IMR-90 (cell line): ENCODE measurements at regions of chr7 and their contacts with region 1.

Region 1: GRCh38 chr7:151519765-151520418 is at the start of gene RHEB:
- DNase-seq: peak; percentile 99
- ATAC-seq: peak; percentile 92
- H3K4me3 ChIP-seq: peak within 1 kb of the TSS; percentile 74
- H3K27ac ChIP-seq: peak within 1 kb of the TSS; percentile 91
- H3K4me1 ChIP-seq: peaks cover 2% of the 10 kb centered on the region; the same call in 1 of the 2 replicates
- H3K27me3 ChIP-seq: no peaks in the 10 kb centered on the region
- CTCF ChIP-seq: no peak
- POLR2A ChIP-seq: no peak; the same call in none of the 2 replicates
- RAD21 ChIP-seq: 0 out of 2 replicates have a peak, but pooled peaks have one; percentile 1
- total RNA-seq, gene RHEB: 19.7 and 45.5 TPM in 2 replicates

Region 2: GRCh38 chr7:150941981-150942590 is 577.8 kb before region 1 on chr7:
- CTCF ChIA-PET with region 1: no interaction called
- POLR2A ChIA-PET with region 1: no interaction called
- dilution Hi-C with region 1: no loop called
- in situ Hi-C with region 1: no loop called
- intact Hi-C with region 1: no loop called
- DNase-seq: no peak
- ATAC-seq: no peak
- H3K4me3 ChIP-seq: no peak overlapping the region
- H3K27ac ChIP-seq: no peak overlapping the region
- H3K4me1 ChIP-seq: peaks cover 5% of the 10 kb centered on the region; the same call in 1 of the 2 replicates
- H3K27me3 ChIP-seq: no peaks in the 10 kb centered on the region
- CTCF ChIP-seq: no peak
- POLR2A ChIP-seq: no peak
- RAD21 ChIP-seq: no peak

Region 3: GRCh38 chr7:151368136-151368571 is 151.7 kb before region 1 on chr7:
- CTCF ChIA-PET with region 1: interaction called, 3 read pairs
- POLR2A ChIA-PET with region 1: no interaction called
- dilution Hi-C with region 1: no loop called
- in situ Hi-C with region 1: no loop called
- intact Hi-C with region 1: loop called (anchors 1 kb)
- DNase-seq: peak; percentile 69
- ATAC-seq: peak; percentile 81
- H3K4me3 ChIP-seq: no peak overlapping the region
- H3K27ac ChIP-seq: no peak overlapping the region
- H3K4me1 ChIP-seq: peaks cover 15% of the 10 kb centered on the region
- H3K27me3 ChIP-seq: no peaks in the 10 kb centered on the region
- CTCF ChIP-seq: peak; percentile 87
- POLR2A ChIP-seq: no peak
- RAD21 ChIP-seq: peak; percentile 84

Region 4: GRCh38 chr7:151459726-151460473 is 60.0 kb before region 1 on chr7:
- CTCF ChIA-PET with region 1: no interaction called
- POLR2A ChIA-PET with region 1: no interaction called
- dilution Hi-C with region 1: no loop called
- in situ Hi-C with region 1: no loop called
- intact Hi-C with region 1: loop called (anchors 2 kb)
- DNase-seq: peak; percentile 86
- ATAC-seq: peak; percentile 93
- H3K4me3 ChIP-seq: peak overlapping the region; percentile 6; the same call in 1 of the 2 replicates
- H3K27ac ChIP-seq: peak overlapping the region; percentile 74
- H3K4me1 ChIP-seq: peaks cover 14% of the 10 kb centered on the region
- H3K27me3 ChIP-seq: no peaks in the 10 kb centered on the region
- CTCF ChIP-seq: peak; percentile 50
- POLR2A ChIP-seq: peak; percentile 22; the same call in 1 of the 2 replicates
- RAD21 ChIP-seq: peak; percentile 59

Region 5: GRCh38 chr7:151558575-151558974 is 38.7 kb after region 1 on chr7:
- CTCF ChIA-PET with region 1: no interaction called
- POLR2A ChIA-PET with region 1: no interaction called
- dilution Hi-C with region 1: no loop called
- in situ Hi-C with region 1: no loop called
- intact Hi-C with region 1: loop called (anchors 5 kb)
- DNase-seq: peak; percentile 87
- ATAC-seq: peak; percentile 89
- H3K4me3 ChIP-seq: no peak overlapping the region
- H3K27ac ChIP-seq: peak overlapping the region; percentile 92
- H3K4me1 ChIP-seq: peaks cover 11% of the 10 kb centered on the region
- H3K27me3 ChIP-seq: no peaks in the 10 kb centered on the region
- CTCF ChIP-seq: no peak
- POLR2A ChIP-seq: no peak
- RAD21 ChIP-seq: 0 out of 2 replicates have a peak, but pooled peaks have one; percentile 5

Region 6: DNA sequence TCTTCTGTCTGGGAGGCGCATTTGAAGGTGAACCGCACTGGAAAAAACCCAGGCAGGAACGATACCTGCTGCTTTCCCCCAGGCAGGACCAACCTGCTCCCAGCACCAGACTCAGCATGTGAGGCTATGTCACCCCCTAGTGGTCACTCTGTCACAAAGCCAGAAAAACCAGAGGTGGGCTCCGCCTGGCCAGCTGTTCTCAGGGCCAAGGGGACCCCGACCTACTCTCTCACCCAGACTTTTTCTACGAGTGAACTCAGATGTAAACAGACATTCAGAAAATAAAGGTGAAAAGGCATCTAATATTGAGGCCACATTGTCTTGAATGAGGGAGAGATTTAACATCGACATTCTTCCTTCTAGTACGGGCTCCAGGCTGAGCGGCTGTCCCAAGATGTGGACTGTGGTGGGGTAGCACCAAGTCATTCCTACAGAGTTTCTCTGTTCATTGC is 239.7 kb after region 1 on chr7:
- CTCF ChIA-PET with region 1: no interaction called
- POLR2A ChIA-PET with region 1: interaction called, 3 read pairs
- dilution Hi-C with region 1: no loop called
- in situ Hi-C with region 1: no loop called
- intact Hi-C with region 1: loop called (anchors 2 kb)
- DNase-seq: peak; percentile 65
- ATAC-seq: peak; percentile 59
- H3K4me3 ChIP-seq: no peak overlapping the region
- H3K27ac ChIP-seq: no peak overlapping the region
- H3K4me1 ChIP-seq: peaks cover 30% of the 10 kb centered on the region
- H3K27me3 ChIP-seq: peaks cover 32% of the 10 kb centered on the region
- CTCF ChIP-seq: peak; percentile 88
- POLR2A ChIP-seq: no peak
- RAD21 ChIP-seq: peak; percentile 96